GM12878 (cell line): ENCODE measurements at regions of chr17 and their contacts with region 1.

Region 1: GRCh38 chr17:27455914-27456680 is at the start of gene KSR1:
- DNase-seq: no peak
- ATAC-seq: peak; percentile 89
- H3K4me3 ChIP-seq: peak within 1 kb of the TSS; percentile 89
- H3K27ac ChIP-seq: peak within 1 kb of the TSS; percentile 38
- H3K4me1 ChIP-seq: peaks cover 16% of the 10 kb centered on the region
- H3K27me3 ChIP-seq: no peaks in the 10 kb centered on the region
- CTCF ChIP-seq: peak; percentile 38 to 56 (median 42); a peak in 5 of 6 replicates
- EP300 ChIP-seq: no peak
- POLR2A ChIP-seq: peak; percentile 75
- RAD21 ChIP-seq: peak; percentile 44
- polyA plus RNA-seq, gene KSR1: 0.97 to 1.7 TPM

Region 2: GRCh38 chr17:27293898-27294688 is 162.0 kb before region 1 on chr17 and contains the start of gene WSB1:
- CTCF ChIA-PET with region 1: interaction called, 3 read pairs
- POLR2A ChIA-PET with region 1: no interaction called
- RAD21 ChIA-PET with region 1: interaction called, 3 read pairs
- SMC1A ChIA-PET with region 1: no interaction called
- in situ Hi-C with region 1: no loop called
- intact Hi-C with region 1: loop called (anchors 5 kb)
- DNase-seq: peak; percentile 61
- ATAC-seq: peak; percentile 83
- H3K4me3 ChIP-seq: peak within 1 kb of the TSS; percentile 86
- H3K27ac ChIP-seq: peak within 1 kb of the TSS; percentile 97
- H3K4me1 ChIP-seq: peaks cover 11% of the 10 kb centered on the region
- H3K27me3 ChIP-seq: no peaks in the 10 kb centered on the region
- CTCF ChIP-seq: no peak
- EP300 ChIP-seq: peak; percentile 20 to 57; a peak in 2 of 4 replicates
- POLR2A ChIP-seq: peak; percentile 100
- RAD21 ChIP-seq: no peak
- polyA plus RNA-seq, gene WSB1: 26.6 to 49.8 TPM

Region 3: GRCh38 chr17:27381007-27381501 is 75.0 kb before region 1 on chr17:
- CTCF ChIA-PET with region 1: interaction called, 11 read pairs
- POLR2A ChIA-PET with region 1: no interaction called
- RAD21 ChIA-PET with region 1: interaction called, 4 read pairs
- SMC1A ChIA-PET with region 1: interaction called, 5 read pairs
- in situ Hi-C with region 1: no loop called
- intact Hi-C with region 1: no loop called
- DNase-seq: peak; percentile 27
- ATAC-seq: peak; percentile 96
- H3K4me3 ChIP-seq: no peak overlapping the region
- H3K27ac ChIP-seq: no peak overlapping the region
- H3K4me1 ChIP-seq: peaks cover 14% of the 10 kb centered on the region
- H3K27me3 ChIP-seq: no peaks in the 10 kb centered on the region
- CTCF ChIP-seq: peak; percentile 100; a peak in 5 of 6 replicates
- EP300 ChIP-seq: no peak
- POLR2A ChIP-seq: no peak
- RAD21 ChIP-seq: peak; percentile 67

Region 4: GRCh38 chr17:27473748-27474609 is 17.9 kb after region 1 on chr17:
- CTCF ChIA-PET with region 1: interaction called, 69 read pairs
- POLR2A ChIA-PET with region 1: interaction called, 143 read pairs
- RAD21 ChIA-PET with region 1: interaction called, 229 read pairs
- SMC1A ChIA-PET with region 1: interaction called, 228 read pairs
- in situ Hi-C with region 1: no loop called
- intact Hi-C with region 1: loop called (anchors 2 kb)
- DNase-seq: peak; percentile 97
- ATAC-seq: peak; percentile 35
- H3K4me3 ChIP-seq: peak overlapping the region; percentile 42
- H3K27ac ChIP-seq: peak overlapping the region; percentile 98
- H3K4me1 ChIP-seq: peaks cover 85% of the 10 kb centered on the region
- H3K27me3 ChIP-seq: no peaks in the 10 kb centered on the region
- CTCF ChIP-seq: no peak
- EP300 ChIP-seq: peak; percentile 68 to 81; a peak in 2 of 4 replicates
- POLR2A ChIP-seq: no peak
- RAD21 ChIP-seq: peak; percentile 17; the same call in 1 of the 2 replicates

Region 5: GRCh38 chr17:27494192-27495091 is 38.3 kb after region 1 on chr17:
- CTCF ChIA-PET with region 1: interaction called, 8 read pairs
- POLR2A ChIA-PET with region 1: interaction called, 11 read pairs
- RAD21 ChIA-PET with region 1: interaction called, 12 read pairs
- SMC1A ChIA-PET with region 1: interaction called, 16 read pairs
- in situ Hi-C with region 1: no loop called
- intact Hi-C with region 1: loop called (anchors 5 kb)
- DNase-seq: no peak
- ATAC-seq: no peak; the same call in 2 of the 3 replicates
- H3K4me3 ChIP-seq: no peak overlapping the region
- H3K27ac ChIP-seq: peak overlapping the region; percentile 80; the same call in 1 of the 2 replicates
- H3K4me1 ChIP-seq: peaks cover 43% of the 10 kb centered on the region
- H3K27me3 ChIP-seq: no peaks in the 10 kb centered on the region
- CTCF ChIP-seq: peak in 1 of 3 experiments; percentile 24; a peak in 2 of 6 replicates
- EP300 ChIP-seq: no peak
- POLR2A ChIP-seq: no peak
- RAD21 ChIP-seq: no peak

Region 6: GRCh38 chr17:27519550-27519949 is 63.5 kb after region 1 on chr17:
- CTCF ChIA-PET with region 1: interaction called, 10 read pairs
- POLR2A ChIA-PET with region 1: interaction called, 4 read pairs
- RAD21 ChIA-PET with region 1: interaction called, 20 read pairs
- SMC1A ChIA-PET with region 1: interaction called, 14 read pairs
- in situ Hi-C with region 1: no loop called
- intact Hi-C with region 1: no loop called
- DNase-seq: peak; percentile 51
- ATAC-seq: peak; percentile 83
- H3K4me3 ChIP-seq: no peak overlapping the region
- H3K27ac ChIP-seq: peak overlapping the region; percentile 75
- H3K4me1 ChIP-seq: peaks cover 36% of the 10 kb centered on the region
- H3K27me3 ChIP-seq: no peaks in the 10 kb centered on the region
- CTCF ChIP-seq: no peak
- EP300 ChIP-seq: no peak
- POLR2A ChIP-seq: no peak
- RAD21 ChIP-seq: 0 out of 2 replicates have a peak, but pooled peaks have one; percentile 6